Activated CD4-positive, alpha-beta T cell treated with anti-CD3 and anti-CD28 coated beads, Interleukin-2, amount 10 ng/mL, durations not matched to agents 7 days and 5 days (primary cell): ENCODE measurements at regions of chr6 and their contacts with region 1.

Region 1: GRCh38 chr6:43228951-43229802 is at the start of gene DNPH1:
- DNase-seq: peak; percentile 72
- H3K4me3 Mint-ChIP-seq: peak within 1 kb of the TSS; percentile 84
- H3K27ac Mint-ChIP-seq: peak within 1 kb of the TSS; percentile 91
- H3K4me1 Mint-ChIP-seq: peaks cover 43% of the 10 kb centered on the region
- H3K27me3 Mint-ChIP-seq: peaks cover 8% of the 10 kb centered on the region
- total RNA-seq, gene DNPH1: 36.7 to 48.6 TPM

Region 2: DNA sequence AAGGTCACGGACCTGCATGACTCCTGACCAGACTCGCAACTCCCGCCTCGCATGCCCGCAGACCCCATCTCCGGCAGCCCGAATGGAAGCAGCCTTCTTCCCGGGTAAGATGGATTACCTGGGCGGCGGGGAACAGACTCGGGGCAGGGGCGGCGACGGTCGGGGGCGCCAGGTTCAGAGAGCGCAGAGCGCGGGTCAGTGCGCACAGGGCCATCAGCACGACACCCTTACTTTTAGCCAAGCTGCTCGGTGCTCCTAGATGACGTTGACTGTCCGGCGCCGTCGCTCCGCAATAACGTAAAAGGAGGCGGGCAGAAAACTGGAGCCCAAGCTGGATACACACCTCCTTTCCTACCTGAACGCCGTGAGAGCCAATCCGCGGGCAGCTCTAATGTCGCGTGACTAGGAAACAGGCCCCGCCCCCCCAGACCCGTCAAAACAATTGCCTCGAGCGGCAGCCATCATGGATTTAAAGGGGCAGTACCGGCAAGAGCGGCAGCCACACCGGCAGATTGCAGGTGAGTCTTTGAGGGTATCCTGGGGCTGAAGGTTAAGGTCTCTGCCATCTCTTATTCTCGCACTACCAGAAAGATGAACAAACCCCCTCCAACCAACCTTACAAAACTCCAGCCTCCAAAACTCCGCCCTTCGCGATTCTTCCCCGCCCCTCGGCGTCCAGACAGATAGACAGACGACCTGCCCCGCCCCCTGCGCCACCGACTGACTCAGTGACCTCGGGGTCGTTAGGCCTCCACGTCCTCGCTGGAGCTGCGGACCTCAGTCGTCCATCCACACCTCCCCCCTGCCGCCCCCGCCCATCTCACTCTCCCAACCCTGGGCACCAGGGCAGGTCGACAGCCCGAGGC is 169.8 kb before region 1 on chr6 and contains the starts of genes KLC4 and MRPL2:
- CTCF ChIA-PET with region 1: no interaction called
- POLR2A ChIA-PET with region 1: no interaction called
- DNase-seq: peak; percentile 98
- H3K4me3 Mint-ChIP-seq: peak within 1 kb of the TSS; percentile 88
- H3K27ac Mint-ChIP-seq: peak within 1 kb of the TSS; percentile 98
- H3K4me1 Mint-ChIP-seq: peaks cover 44% of the 10 kb centered on the region
- H3K27me3 Mint-ChIP-seq: no peaks in the 10 kb centered on the region
- total RNA-seq, gene KLC4: 12.7 to 17.0 TPM
- total RNA-seq, gene MRPL2: 53.9 to 59.3 TPM

Region 3: GRCh38 chr6:43174263-43175112 is 54.7 kb before region 1 on chr6:
- CTCF ChIA-PET with region 1: interaction called, 15 read pairs
- POLR2A ChIA-PET with region 1: no interaction called
- DNase-seq: peak; percentile 98
- H3K4me3 Mint-ChIP-seq: peak overlapping the region; percentile 97
- H3K27ac Mint-ChIP-seq: peak overlapping the region; percentile 82
- H3K4me1 Mint-ChIP-seq: peaks cover 49% of the 10 kb centered on the region
- H3K27me3 Mint-ChIP-seq: no peaks in the 10 kb centered on the region

Region 4: DNA sequence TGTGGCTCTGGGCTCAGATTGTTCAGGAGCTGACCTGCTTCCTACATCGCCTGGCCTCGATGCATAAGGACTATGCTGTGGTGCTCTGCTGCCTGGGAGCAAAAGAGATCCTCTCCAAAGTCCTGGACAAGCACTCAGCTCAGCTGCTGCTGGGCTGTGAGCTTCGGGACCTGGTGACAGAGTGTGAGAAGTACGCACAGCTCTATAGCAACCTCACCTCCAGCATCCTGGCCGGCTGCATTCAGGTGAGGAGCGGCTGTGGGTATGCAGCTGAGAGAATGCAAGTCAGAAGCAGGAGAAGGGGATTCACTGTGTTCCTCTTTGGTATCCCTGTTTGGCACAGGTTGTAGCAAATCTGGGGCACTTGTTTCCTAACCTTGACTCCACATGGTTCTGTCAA is 29.3 kb before region 1 on chr6:
- CTCF ChIA-PET with region 1: interaction called, 10 read pairs
- POLR2A ChIA-PET with region 1: no interaction called
- DNase-seq: no peak
- H3K4me3 Mint-ChIP-seq: no peak overlapping the region
- H3K27ac Mint-ChIP-seq: no peak overlapping the region
- H3K4me1 Mint-ChIP-seq: peaks cover 2% of the 10 kb centered on the region
- H3K27me3 Mint-ChIP-seq: no peaks in the 10 kb centered on the region

Region 5: GRCh38 chr6:43247113-43247999 is 18.2 kb after region 1 on chr6:
- CTCF ChIA-PET with region 1: interaction called, 21 read pairs
- POLR2A ChIA-PET with region 1: no interaction called
- DNase-seq: peak; percentile 85
- H3K4me3 Mint-ChIP-seq: peak overlapping the region; percentile 71
- H3K27ac Mint-ChIP-seq: peak overlapping the region; percentile 82
- H3K4me1 Mint-ChIP-seq: peaks cover 25% of the 10 kb centered on the region
- H3K27me3 Mint-ChIP-seq: peaks cover 19% of the 10 kb centered on the region

Region 6: DNA sequence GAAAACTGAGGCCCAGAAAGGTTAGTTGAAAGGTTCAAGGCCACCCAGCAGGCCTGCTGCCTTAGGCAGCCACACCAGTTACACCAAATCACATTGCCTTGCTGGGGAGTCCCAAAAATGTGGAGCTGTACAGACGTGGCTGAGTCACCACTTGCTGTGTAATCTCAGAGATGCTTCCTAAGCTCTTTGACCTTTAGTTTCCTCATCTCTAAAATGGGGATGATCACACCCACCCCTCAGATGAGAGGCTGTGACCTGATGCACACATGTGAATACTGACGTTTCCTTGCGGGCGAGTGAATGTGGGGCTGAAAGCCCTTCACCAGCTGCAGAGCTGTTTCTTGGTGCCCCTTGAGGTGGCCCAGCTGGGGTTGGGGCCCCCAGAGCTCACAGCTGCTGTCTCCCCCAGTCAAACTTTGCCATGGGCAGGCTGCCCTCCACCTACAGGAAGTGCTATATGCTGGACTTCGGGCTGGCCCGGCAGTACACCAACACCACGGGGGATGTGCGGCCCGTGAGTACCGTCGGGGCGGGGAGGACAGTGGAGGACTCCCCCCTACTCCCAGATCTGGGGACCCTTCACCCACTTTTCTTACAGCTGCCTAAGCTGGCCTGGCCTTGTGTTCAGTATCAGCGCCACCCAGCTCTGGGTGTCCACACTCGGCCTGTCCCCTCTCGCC is 25.1 kb after region 1 on chr6:
- CTCF ChIA-PET with region 1: interaction called, 10 read pairs
- POLR2A ChIA-PET with region 1: no interaction called
- DNase-seq: no peak
- H3K4me3 Mint-ChIP-seq: no peak overlapping the region
- H3K27ac Mint-ChIP-seq: no peak overlapping the region
- H3K4me1 Mint-ChIP-seq: peaks cover 10% of the 10 kb centered on the region
- H3K27me3 Mint-ChIP-seq: peaks cover 21% of the 10 kb centered on the region

Region 7: GRCh38 chr6:43402820-43403219 is 173.6 kb after region 1 on chr6:
- CTCF ChIA-PET with region 1: interaction called, 11 read pairs
- POLR2A ChIA-PET with region 1: no interaction called
- DNase-seq: no peak
- H3K4me3 Mint-ChIP-seq: no peak overlapping the region
- H3K27ac Mint-ChIP-seq: no peak overlapping the region
- H3K4me1 Mint-ChIP-seq: no peaks in the 10 kb centered on the region
- H3K27me3 Mint-ChIP-seq: peaks cover 40% of the 10 kb centered on the region